ENCODE measurements at regions of chr2 and their contacts with region 1.

Region 1: DNA sequence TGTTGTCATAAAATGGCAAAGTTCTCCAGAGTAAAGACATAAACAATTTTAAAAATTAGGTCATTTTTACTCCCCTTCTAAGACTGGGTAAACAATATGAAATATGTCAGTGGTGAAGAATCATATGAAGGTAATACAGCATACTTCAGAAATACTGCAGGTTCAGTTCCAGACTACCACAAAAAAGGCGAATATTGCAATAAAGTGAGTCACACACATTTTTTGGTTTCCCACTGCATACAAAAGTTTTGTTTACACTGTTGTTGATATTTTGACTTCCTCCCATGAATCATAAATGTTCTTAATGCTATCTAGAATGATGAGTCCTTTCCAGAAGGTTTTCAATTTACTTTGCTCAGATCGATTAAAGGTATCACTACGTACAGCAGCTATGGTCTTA is 73.5 kb downstream of the SMC6 start:
- DNase-seq: peak; percentile 70
- ATAC-seq: peak; percentile 92
- H3K4me3 ChIP-seq: no peak overlapping the region
- H3K27ac ChIP-seq: no peak overlapping the region
- H3K4me1 ChIP-seq: peaks cover 14% of the 10 kb centered on the region
- H3K27me3 ChIP-seq: no peaks in the 10 kb centered on the region
- CTCF ChIP-seq: no peak

Region 2: DNA sequence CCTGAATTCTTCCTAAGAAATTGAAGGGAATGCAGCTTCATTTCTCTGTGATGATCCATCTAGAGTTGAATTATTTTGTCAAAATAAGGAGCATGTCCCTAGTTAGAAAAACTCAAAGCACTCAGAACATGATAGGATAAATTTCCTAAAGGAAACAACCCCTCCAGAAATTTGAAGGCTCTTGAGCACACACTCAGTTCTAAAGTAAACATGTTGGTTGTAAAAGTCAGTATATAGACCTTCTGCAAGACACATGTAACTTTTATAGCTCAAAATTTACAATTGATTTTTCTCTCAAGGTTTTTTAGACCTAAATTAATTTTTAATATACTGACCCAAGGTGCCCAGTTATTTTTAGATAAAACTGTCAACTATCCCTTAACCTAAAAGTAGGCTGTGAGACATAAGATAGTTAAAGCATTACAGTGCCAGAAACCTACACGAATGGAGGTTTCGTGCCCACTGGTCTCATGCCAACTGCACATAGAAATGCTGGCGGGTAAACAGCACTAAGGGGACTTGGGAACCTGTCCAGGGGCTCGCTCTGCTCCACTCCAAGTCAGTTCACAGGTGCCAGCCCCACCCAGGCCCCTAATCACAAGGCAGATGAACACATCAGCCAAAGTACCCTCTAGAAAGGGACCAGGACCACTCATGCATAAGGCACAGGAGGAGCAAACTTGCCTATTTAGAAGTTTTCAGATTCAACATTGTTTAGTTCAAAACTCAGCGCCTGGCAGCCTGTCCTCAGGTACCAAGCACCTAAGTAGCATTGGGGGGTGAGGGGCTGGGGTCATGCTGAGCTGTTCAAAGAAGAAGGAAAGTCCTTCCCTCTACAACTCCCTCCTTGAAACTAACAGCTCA is 33.0 kb before region 1 on chr2:
- CTCF ChIA-PET with region 1: no interaction called
- POLR2A ChIA-PET with region 1: no interaction called
- intact Hi-C with region 1: no loop called
- DNase-seq: no peak
- ATAC-seq: no peak
- H3K4me3 ChIP-seq: no peak overlapping the region
- H3K27ac ChIP-seq: no peak overlapping the region
- H3K4me1 ChIP-seq: peaks cover 18% of the 10 kb centered on the region
- H3K27me3 ChIP-seq: no peaks in the 10 kb centered on the region
- CTCF ChIP-seq: no peak

Region 3: DNA sequence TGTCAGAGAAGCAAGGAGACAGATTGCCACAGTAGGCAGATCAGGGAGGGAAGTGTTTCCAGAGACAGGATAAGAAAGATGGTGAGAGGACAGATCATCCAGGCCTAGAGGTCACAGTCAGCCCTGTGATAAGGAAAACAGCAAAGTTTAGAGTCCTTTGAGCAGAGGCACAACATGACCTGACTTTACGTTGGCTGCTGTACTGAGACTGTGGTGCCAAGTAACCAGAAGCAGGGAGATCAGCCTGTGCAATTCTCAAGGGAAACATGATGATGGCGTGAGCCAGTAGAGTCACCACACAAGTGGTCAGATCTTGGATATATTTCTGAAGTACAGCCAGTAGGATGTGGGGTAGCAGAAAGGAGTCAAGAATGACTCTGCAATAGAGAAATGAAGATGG is 29.8 kb after region 1 on chr2:
- CTCF ChIA-PET with region 1: no interaction called
- POLR2A ChIA-PET with region 1: no interaction called
- intact Hi-C with region 1: no loop called
- DNase-seq: no peak
- ATAC-seq: no peak
- H3K4me3 ChIP-seq: no peak overlapping the region
- H3K27ac ChIP-seq: no peak overlapping the region
- H3K4me1 ChIP-seq: no peaks in the 10 kb centered on the region
- H3K27me3 ChIP-seq: no peaks in the 10 kb centered on the region
- CTCF ChIP-seq: no peak

Region 4: DNA sequence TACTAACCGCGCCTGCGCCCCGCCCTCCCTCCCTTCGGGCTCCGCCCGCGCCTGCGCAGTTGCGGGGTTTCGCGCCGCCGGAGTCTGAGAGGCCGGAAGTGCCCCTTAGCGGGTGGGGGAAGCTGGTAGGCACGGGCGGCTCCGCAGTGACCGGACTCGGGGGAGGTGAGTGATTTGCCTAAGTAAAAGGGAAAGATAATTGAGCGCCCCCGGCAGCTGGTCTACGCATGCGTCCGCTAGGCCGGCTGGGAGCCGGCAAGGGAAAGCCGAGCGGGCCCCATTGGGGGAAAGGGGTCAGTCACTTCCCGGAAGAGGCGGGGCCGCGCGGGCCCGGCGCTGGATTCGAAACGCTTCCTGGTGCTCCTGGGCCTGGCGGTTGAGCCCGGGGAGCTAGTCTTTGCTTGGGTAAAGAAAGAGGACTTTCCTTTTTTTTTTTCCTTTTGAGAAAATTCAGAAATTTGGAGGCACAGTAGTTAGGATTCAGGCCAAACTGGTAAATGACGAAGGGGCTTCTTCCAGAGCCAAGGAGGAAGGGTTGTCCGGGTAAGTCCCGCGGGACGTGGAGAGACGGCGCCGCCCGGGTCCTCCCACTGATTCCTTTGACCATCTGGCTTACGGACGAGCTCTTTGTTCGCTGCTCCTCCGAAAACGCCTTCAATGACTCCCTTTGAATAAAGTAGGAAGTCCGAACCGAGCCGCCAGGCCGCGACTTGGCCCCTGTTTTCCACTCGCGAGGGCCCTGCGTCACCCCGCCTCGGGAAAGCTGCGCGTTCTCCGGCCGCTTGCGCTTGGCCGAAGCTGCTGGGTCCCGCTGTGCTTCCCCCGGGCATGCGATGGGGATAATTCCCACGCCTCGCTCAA is 73.9 kb after region 1 on chr2 and contains the starts of genes GEN1 and SMC6:
- CTCF ChIA-PET with region 1: no interaction called
- POLR2A ChIA-PET with region 1: no interaction called
- intact Hi-C with region 1: loop called (anchors 2 kb)
- DNase-seq: peak; percentile 86
- ATAC-seq: peak; percentile 77
- H3K4me3 ChIP-seq: peak within 1 kb of the TSS; percentile 97
- H3K27ac ChIP-seq: peak within 1 kb of the TSS; percentile 95
- H3K4me1 ChIP-seq: peaks cover 31% of the 10 kb centered on the region
- H3K27me3 ChIP-seq: no peaks in the 10 kb centered on the region
- CTCF ChIP-seq: no peak
- total RNA-seq, gene GEN1: 21.1 and 21.4 TPM in 2 replicates
- total RNA-seq, gene SMC6: 14.1 and 15.6 TPM in 2 replicates